T-cell (primary cell): ENCODE measurements at regions of chr10 and their contacts with region 1.

Region 1: DNA sequence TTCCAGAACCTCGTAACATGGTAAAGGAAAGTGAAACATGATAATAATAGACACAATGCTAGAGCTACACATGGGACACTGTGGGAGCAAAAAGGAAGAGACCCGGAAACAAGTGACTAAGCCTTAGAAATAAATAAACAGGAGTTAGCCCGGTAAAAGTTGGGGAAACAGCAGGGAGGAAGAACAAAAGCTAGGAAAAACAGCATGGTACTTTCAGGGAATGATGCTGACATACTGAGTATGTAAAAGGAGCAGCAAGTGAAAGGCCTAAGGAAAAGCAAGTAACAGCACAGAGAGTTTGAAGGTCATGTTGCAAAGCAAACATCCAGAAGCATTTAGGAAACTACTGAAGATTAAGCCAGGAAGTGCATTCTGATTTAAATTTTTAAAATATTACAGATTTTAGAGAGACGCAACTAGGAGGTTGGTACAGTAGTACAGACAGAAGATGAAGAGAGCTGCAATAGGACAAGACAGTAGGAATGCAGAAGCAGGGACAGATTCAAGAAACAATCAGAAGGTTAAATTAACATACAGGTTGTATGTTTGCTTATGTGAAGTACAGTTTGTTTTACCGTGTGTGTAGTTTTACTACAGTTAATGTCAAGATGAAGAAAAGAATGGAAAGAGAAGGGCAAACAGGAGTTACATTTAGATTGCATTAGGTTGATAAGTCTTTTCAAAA is 63.7 kb downstream of the ARHGAP12 start:
- DNase-seq: no peak
- ATAC-seq: no peak
- H3K4me3 ChIP-seq: no peak overlapping the region
- H3K4me3 Mint-ChIP-seq: no peak overlapping the region
- H3K27ac ChIP-seq: no peak overlapping the region
- H3K27ac Mint-ChIP-seq: no peak overlapping the region
- H3K4me1 ChIP-seq: no peaks in the 10 kb centered on the region
- H3K4me1 Mint-ChIP-seq: peaks cover 26 to 40% (median 32%) of the 10 kb centered on the region in 3 donors
- H3K27me3 ChIP-seq: no peaks in the 10 kb centered on the region
- H3K27me3 Mint-ChIP-seq: no peaks in the 10 kb centered on the region

Region 2: DNA sequence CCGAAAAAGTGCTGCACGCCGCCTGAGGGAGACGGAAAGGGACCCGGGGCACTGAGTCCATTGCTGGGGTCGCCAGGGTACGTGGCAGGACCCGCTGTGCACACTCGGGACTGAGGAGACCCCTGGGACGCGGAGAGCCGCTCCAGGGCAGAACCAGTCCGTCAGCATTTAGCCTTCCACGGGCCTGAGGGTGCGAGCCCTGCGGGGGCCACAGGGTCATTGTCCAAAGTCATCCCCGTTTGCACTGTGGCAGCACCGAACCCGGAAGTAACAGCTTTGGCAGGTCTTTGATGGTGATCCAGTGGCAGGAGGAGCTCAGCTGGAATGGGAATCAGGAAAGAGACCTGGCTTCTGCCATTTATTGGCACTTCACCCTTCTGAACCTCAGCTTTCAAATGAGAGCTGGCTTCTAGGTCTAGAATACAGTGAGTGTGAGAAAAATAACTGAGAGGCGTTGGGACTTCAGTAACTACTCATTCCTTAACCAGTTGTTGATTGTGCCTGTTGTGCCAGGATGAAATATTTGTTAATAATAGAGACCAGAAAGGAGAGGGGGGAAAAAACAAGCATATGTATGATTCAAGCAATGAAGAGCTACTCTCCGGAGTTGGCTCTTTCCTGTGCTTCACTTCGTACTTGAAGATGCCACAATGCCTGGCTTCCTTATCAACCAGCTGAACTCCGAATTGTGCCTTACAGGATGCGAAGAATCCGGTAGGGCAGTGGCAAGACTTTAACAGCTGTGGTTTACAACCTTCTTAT is 64.5 kb after region 1 on chr10:
- CTCF ChIA-PET with region 1: interaction called, 5 to 13 read pairs
- POLR2A ChIA-PET with region 1: interaction called in 1 of 2 experiments, 5 read pairs
- DNase-seq: peak in 15 of 35 experiments; percentile 3 to 56 (median 12)
- ATAC-seq: peak in 1 of 4 experiments; percentile 10
- H3K4me3 ChIP-seq: peak overlapping the region; percentile 70 to 96
- H3K4me3 Mint-ChIP-seq: peak overlapping the region; percentile 85 to 93 (median 85)
- H3K27ac ChIP-seq: peak overlapping the region; percentile 79
- H3K27ac Mint-ChIP-seq: peak overlapping the region; percentile 62 to 67
- H3K4me1 ChIP-seq: peaks cover 7 to 21% of the 10 kb centered on the region in 2 experiments
- H3K4me1 Mint-ChIP-seq: peaks cover 40 to 47% (median 42%) of the 10 kb centered on the region in 3 donors
- H3K27me3 ChIP-seq: no peaks in the 10 kb centered on the region
- H3K27me3 Mint-ChIP-seq: no peaks in the 10 kb centered on the region

Region 3: GRCh38 chr10:32005050-32005449 is 140.1 kb after region 1 on chr10:
- CTCF ChIA-PET with region 1: interaction called, 12 to 71 read pairs
- POLR2A ChIA-PET with region 1: interaction called, 4 read pairs
- DNase-seq: peak in 31 of 35 experiments; percentile 5 to 68 (median 37)
- ATAC-seq: peak; percentile 64 to 77 (median 72)
- H3K4me3 ChIP-seq: no peak overlapping the region
- H3K4me3 Mint-ChIP-seq: no peak overlapping the region
- H3K27ac ChIP-seq: no peak overlapping the region
- H3K27ac Mint-ChIP-seq: no peak overlapping the region
- H3K4me1 ChIP-seq: no peaks in the 10 kb centered on the region
- H3K4me1 Mint-ChIP-seq: peaks cover 7 to 9% (median 7%) of the 10 kb centered on the region in 3 donors
- H3K27me3 ChIP-seq: no peaks in the 10 kb centered on the region
- H3K27me3 Mint-ChIP-seq: no peaks in the 10 kb centered on the region

Region 4: GRCh38 chr10:32065856-32066255 is 200.9 kb after region 1 on chr10:
- CTCF ChIA-PET with region 1: no interaction called
- POLR2A ChIA-PET with region 1: no interaction called
- DNase-seq: no peak
- ATAC-seq: no peak
- H3K4me3 ChIP-seq: no peak overlapping the region
- H3K4me3 Mint-ChIP-seq: no peak overlapping the region
- H3K27ac ChIP-seq: no peak overlapping the region
- H3K27ac Mint-ChIP-seq: no peak overlapping the region
- H3K4me1 ChIP-seq: no peaks in the 10 kb centered on the region
- H3K4me1 Mint-ChIP-seq: no peaks in the 10 kb centered on the region
- H3K27me3 ChIP-seq: peaks cover 0 to 4% of the 10 kb centered on the region in 2 experiments
- H3K27me3 Mint-ChIP-seq: no peaks in the 10 kb centered on the region